Cardiac septum (tissue), 1 donor: ENCODE measurements at regions of chr10 and their contacts with region 1.

Region 1: DNA sequence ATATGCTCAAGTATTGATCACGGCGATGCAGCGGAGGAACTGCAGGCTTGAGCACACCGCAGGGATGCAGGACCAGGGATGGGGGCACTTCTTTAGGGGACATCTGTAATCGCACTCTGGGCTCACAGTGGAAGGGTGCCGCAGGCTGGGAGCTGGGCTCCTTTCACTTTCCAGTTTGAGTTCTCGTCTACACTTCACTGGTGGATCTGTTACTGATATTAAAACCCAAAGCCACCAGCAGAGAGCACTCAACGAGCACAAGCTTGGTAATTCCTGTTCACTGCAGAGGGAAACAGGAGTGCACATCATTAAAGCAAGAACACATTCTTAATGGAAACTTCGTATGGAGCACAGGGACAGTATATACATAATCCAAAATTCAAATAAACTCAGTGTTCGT is 91.3 kb downstream of the PARD3 start:
- DNase-seq: no peak

Region 2: GRCh38 chr10:34954168-34954567 is 230.4 kb after region 1 on chr10:
- intact Hi-C with region 1: loop called (anchors 10 kb)
- DNase-seq: no peak